Heart right ventricle (tissue), 16 donors: ENCODE measurements at regions of chr1 and their contacts with region 1.

Region 1: GRCh38 chr1:151346769-151347522 is at the start of gene RFX5:
- DNase-seq: peak; percentile 89 to 95
- ATAC-seq: peak; percentile 96 to 99 (median 98)
- H3K4me3 ChIP-seq: peak within 1 kb of the TSS; percentile 56 to 82 (median 68)
- H3K27ac ChIP-seq: peak within 1 kb of the TSS; percentile 16 to 95 (median 89)
- H3K4me1 ChIP-seq: peaks cover 0 to 25% (median 13%) of the 10 kb centered on the region in 9 donors
- H3K27me3 ChIP-seq: no peaks in the 10 kb centered on the region
- CTCF ChIP-seq: no peak
- total RNA-seq, gene RFX5: 12.6 to 38.4 (median 24.0) TPM

Region 2: GRCh38 chr1:151281969-151282882 is 64.7 kb before region 1 on chr1 and contains the start of gene ZNF687:
- intact Hi-C with region 1: loop called in 1 of 10 experiments (anchors 10 kb)
- DNase-seq: peak; percentile 100
- ATAC-seq: peak; percentile 90 to 96 (median 94)
- H3K4me3 ChIP-seq: peak within 1 kb of the TSS; percentile 73 to 96 (median 86)
- H3K27ac ChIP-seq: peak within 1 kb of the TSS; percentile 94 to 99 (median 97)
- H3K4me1 ChIP-seq: peaks cover 0 to 36% (median 20%) of the 10 kb centered on the region in 9 donors
- H3K27me3 ChIP-seq: no peaks in the 10 kb centered on the region
- CTCF ChIP-seq: peak in 1 of 9 donors; percentile 13
- total RNA-seq, gene ZNF687: 10.4 to 15.1 (median 13.1) TPM

Region 3: GRCh38 chr1:151372061-151372934 is 25.4 kb after region 1 on chr1 and contains the start of gene SELENBP1:
- intact Hi-C with region 1: loop called in 1 of 10 experiments (anchors 1 kb)
- DNase-seq: peak; percentile 82 to 94
- ATAC-seq: peak; percentile 85 to 93 (median 90)
- H3K4me3 ChIP-seq: peak within 1 kb of the TSS; percentile 21 to 64 (median 58)
- H3K27ac ChIP-seq: peak within 1 kb of the TSS; percentile 28 to 89 (median 84)
- H3K4me1 ChIP-seq: peaks cover 21 to 60% (median 55%) of the 10 kb centered on the region in 9 donors
- H3K27me3 ChIP-seq: no peaks in the 10 kb centered on the region
- CTCF ChIP-seq: no peak
- total RNA-seq, gene SELENBP1: 32.3 to 112 (median 59.7) TPM